Heart left ventricle (tissue), 16 donors: ENCODE measurements at regions of chr4 and their contacts with region 1.

Region 1: DNA sequence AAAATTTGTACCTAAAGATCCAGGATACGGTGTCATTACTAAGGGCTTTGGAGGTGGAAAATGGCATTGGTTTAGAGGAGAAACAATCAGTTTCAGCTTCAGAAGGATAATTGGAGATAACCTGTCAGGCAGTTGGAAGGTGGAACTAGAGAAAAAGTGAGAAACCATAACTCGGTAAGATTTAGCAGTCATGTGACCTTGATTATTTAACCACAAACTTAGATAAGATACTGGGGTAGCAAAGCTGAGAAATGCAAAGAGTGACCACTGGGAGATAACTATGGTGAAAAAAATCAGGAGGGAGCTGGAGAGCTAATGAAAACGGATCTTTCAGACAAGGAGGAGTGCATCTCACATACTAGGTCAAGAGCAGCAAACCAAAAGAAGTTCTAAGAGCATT is 58.3 kb upstream of the SMARCA5 start:
- DNase-seq: no peak
- ATAC-seq: peak in 1 of 4 donors; percentile 15
- H3K4me3 ChIP-seq: no peak overlapping the region
- H3K27ac ChIP-seq: peak overlapping the region in 7 of 12 donors; percentile 8 to 51 (median 35)
- H3K4me1 ChIP-seq: peaks cover 0 to 16% (median 2%) of the 10 kb centered on the region in 12 donors
- H3K27me3 ChIP-seq: no peaks in the 10 kb centered on the region
- CTCF ChIP-seq: no peak
- POLR2A ChIP-seq: no peak

Region 2: DNA sequence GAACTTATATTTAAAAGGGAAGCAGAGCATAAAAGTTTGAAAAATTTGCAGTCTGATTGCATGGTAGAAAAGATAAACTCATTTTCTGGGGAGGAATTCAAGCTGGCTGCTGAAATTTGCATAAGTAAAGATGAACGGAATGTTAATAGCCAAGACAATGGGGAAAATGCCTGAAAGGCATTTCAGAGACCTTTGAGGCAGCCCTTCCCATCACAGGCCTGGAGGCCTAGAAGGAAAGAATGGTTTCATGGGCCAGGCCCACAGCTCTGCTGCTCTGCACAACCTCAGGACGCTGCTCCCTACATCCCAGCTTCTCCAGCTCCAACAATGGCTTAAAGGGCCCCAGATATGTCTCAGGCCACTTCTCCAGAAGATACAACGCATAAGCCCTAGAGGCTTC is 562.2 kb before region 1 on chr4:
- intact Hi-C with region 1: no loop called
- DNase-seq: no peak
- ATAC-seq: no peak
- H3K4me3 ChIP-seq: no peak overlapping the region
- H3K27ac ChIP-seq: no peak overlapping the region
- H3K4me1 ChIP-seq: no peaks in the 10 kb centered on the region
- H3K27me3 ChIP-seq: no peaks in the 10 kb centered on the region
- CTCF ChIP-seq: no peak
- POLR2A ChIP-seq: no peak

Region 3: GRCh38 chr4:142984871-142985585 is 470.2 kb before region 1 on chr4:
- intact Hi-C with region 1: no loop called
- DNase-seq: no peak
- ATAC-seq: no peak
- H3K4me3 ChIP-seq: no peak overlapping the region
- H3K27ac ChIP-seq: no peak overlapping the region
- H3K4me1 ChIP-seq: peaks cover 0 to 7% (median 0%) of the 10 kb centered on the region in 12 donors
- H3K27me3 ChIP-seq: no peaks in the 10 kb centered on the region
- CTCF ChIP-seq: peak in 8 of 12 donors; percentile 10 to 34 (median 19)
- POLR2A ChIP-seq: no peak

Region 4: GRCh38 chr4:143375313-143376073 is 79.7 kb before region 1 on chr4:
- intact Hi-C with region 1: loop called in 1 of 10 experiments (anchors 5 kb)
- DNase-seq: peak in 3 of 5 donors; percentile 37 to 50 (median 47)
- ATAC-seq: peak; percentile 34 to 78 (median 74)
- H3K4me3 ChIP-seq: no peak overlapping the region
- H3K27ac ChIP-seq: peak overlapping the region in 7 of 12 donors; percentile 16 to 83 (median 64)
- H3K4me1 ChIP-seq: peaks cover 4 to 88% (median 70%) of the 10 kb centered on the region in 12 donors
- H3K27me3 ChIP-seq: no peaks in the 10 kb centered on the region
- CTCF ChIP-seq: peak in 9 of 12 donors; percentile 11 to 49 (median 42)
- POLR2A ChIP-seq: no peak